AG04449 (cell line): ENCODE measurements at regions of chr3 and their contacts with region 1.

Region 1: GRCh38 chr3:187616307-187616972 is 53.8 kb downstream of the SST start:
- DNase-seq: no peak
- H3K4me3 ChIP-seq: no peak overlapping the region
- CTCF ChIP-seq: peak; percentile 66

Region 2: DNA sequence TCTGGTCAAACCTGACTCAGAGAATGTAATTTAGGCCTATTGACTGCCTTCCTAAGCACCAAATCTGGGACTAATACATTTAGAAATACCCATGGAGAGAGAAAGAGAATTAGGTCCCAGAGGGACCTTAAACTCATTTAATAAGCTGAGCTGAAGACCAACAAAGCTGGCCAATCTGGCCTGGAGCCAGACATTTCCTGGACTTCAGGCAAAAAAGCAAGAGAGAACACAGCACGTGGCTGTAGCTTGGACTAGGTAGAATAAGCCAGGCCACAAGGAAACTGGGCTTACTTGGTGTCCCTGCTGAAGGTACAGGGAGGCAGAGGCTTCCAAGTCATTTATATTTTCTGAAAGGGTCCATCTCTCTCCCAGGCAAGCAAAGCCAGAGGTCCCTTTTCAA is 160.2 kb before region 1 on chr3:
- CTCF ChIA-PET with region 1: no interaction called
- POLR2A ChIA-PET with region 1: no interaction called
- DNase-seq: no peak
- H3K4me3 ChIP-seq: no peak overlapping the region
- CTCF ChIP-seq: no peak

Region 3: GRCh38 chr3:187628169-187628568 is 11.7 kb after region 1 on chr3:
- CTCF ChIA-PET with region 1: interaction called, 12 read pairs
- POLR2A ChIA-PET with region 1: no interaction called
- DNase-seq: no peak
- H3K4me3 ChIP-seq: no peak overlapping the region
- CTCF ChIP-seq: no peak

Region 4: GRCh38 chr3:187669675-187670504 is 53.5 kb after region 1 on chr3 and contains the start of gene SST:
- CTCF ChIA-PET with region 1: interaction called, 15 read pairs
- POLR2A ChIA-PET with region 1: no interaction called
- DNase-seq: no peak
- H3K4me3 ChIP-seq: no peak within 1 kb of the TSS
- CTCF ChIP-seq: no peak